Colonic mucosa (tissue), 4 donors: ENCODE measurements at regions of chr11 and their contacts with region 1.

Region 1: GRCh38 chr11:12673924-12674570 is at the start of gene TEAD1:
- DNase-seq: peak; percentile 98
- H3K4me3 ChIP-seq: peak within 1 kb of the TSS; percentile 62
- H3K27ac ChIP-seq: peak within 1 kb of the TSS; percentile 86
- H3K4me1 ChIP-seq: no peaks in the 10 kb centered on the region
- H3K27me3 ChIP-seq: no peaks in the 10 kb centered on the region
- CTCF ChIP-seq: no peak
- total RNA-seq, gene TEAD1: 32.7 to 56.7 TPM

Region 2: DNA sequence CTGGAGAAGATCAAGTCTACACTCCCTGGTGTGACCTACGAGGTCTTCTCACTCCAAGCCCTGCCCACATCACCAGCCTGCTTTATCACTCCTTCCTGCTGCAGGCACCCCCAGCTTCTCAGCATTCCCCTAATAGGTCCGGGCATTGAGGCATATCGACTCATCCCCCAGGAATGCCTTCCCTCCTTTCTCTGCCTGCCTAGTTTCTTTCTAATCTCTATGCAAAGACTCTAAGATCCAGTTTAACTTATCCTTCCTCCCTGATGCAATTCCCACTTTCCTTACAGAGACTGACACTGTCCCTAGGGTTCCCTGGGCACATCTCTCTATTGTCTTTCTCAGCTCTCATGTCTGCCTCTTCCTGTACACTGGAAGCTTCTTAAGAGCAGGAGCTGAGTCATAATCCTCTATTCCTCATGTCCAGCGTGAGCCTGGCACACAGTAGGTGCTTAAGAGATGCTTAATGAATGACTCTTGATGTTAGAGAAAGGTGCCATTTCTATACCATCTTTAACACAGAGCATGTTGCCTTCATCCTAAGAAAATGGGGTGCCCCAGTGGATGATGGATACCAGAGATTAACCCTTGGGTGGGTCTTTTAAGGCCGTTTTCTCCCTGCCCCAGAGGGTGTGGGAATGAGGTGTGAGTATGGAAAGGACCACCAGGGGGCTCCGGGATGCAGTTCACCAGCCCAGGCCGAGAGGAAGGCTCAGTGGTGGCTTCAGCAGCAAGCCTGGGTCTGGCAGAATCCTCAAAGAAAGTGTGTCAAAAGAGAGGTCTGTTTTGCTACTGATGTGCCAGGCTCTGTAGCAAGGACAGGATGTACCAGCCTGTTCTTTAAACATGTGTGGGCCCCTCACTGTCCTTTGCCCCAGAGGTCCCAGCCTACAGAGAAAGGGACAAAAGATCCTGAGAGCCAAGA is 262.0 kb before region 1 on chr11:
- intact Hi-C with region 1: loop called (anchors 10 kb)
- DNase-seq: peak; percentile 61
- H3K4me3 ChIP-seq: no peak overlapping the region
- H3K27ac ChIP-seq: peak overlapping the region; percentile 30
- H3K4me1 ChIP-seq: no peaks in the 10 kb centered on the region
- H3K27me3 ChIP-seq: no peaks in the 10 kb centered on the region
- CTCF ChIP-seq: peak; percentile 47

Region 3: DNA sequence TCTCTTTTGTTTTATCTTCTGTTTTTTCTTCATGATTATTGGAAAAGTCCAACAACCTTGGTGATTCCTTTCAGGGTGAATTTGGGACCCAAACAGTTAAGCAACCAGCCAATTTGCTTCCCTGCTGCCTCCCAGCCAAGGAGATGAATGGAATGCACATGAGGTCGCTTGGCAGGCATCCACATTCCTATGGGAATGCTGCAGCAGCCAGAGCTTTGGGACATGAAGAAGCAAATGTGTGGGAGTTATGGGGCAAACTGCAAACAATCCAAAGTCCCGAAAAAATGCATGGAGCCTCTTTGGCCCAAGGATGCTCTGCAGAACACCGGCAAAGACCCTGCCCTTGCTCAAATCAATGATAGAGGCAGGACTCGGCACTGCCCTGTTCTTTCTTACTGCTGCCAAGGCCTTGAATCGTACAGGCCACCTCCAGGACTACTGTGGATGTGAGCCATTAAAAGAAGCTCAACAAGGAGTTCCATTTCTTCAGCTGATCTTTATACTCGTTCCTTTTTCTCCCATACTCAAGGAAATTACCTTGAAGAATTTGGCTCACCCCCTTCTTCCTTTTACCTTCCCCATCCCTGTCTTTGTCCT is 117.2 kb before region 1 on chr11:
- intact Hi-C with region 1: no loop called
- DNase-seq: peak; percentile 36
- H3K4me3 ChIP-seq: no peak overlapping the region
- H3K27ac ChIP-seq: no peak overlapping the region
- H3K4me1 ChIP-seq: no peaks in the 10 kb centered on the region
- H3K27me3 ChIP-seq: no peaks in the 10 kb centered on the region
- CTCF ChIP-seq: no peak